Calu3 (cell line): ENCODE measurements at regions of chr6 and their contacts with region 1.

Region 1: DNA sequence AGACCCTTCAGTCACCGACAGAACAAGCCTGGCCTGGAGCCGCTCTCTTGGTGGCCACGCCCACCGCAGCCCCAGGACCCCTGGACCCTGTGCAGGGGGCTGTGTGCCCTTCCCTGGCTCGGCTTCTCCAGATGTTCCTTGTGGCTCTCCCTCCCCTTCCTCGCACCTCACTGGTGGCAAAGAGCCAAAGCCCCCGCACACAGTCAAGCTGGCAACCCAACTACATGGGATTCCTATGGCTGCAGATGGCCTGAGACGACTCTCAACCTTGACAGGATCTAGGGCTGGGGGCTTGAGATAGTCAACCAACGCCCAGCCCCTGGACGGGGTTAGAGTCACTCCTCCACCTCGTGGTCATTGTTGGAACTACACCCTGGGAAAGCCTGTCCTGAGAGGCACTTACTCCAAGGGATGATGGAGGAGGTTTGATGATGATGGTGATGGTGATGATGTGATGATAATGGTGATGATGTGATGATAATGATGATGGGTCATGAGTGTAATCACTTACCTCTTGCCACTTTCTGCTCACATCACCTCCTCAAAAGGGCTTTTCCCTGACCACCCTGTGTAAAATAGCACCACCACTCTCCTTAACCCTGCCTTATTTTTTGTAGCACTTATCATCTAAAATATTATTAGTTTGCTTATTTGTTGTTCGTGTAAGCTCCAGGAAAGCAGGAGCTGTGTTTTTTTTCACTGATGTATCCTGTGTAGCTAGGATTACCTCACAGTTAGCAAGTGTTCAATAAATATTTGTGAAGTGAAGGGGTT is 278.4 kb downstream of the LRFN2 start:
- DNase-seq: peak; percentile 82
- H3K4me3 Mint-ChIP-seq: no peak overlapping the region
- H3K27ac Mint-ChIP-seq: no peak overlapping the region
- H3K4me1 Mint-ChIP-seq: no peaks in the 10 kb centered on the region
- H3K27me3 Mint-ChIP-seq: peaks cover 66% of the 10 kb centered on the region
- CTCF ChIP-seq: peak; percentile 92

Region 2: GRCh38 chr6:39347906-39348585 is 960.7 kb before region 1 on chr6:
- CTCF ChIA-PET with region 1: no interaction called
- intact Hi-C with region 1: loop called (anchors 5 kb)
- DNase-seq: peak; percentile 83
- H3K4me3 Mint-ChIP-seq: no peak overlapping the region
- H3K27ac Mint-ChIP-seq: no peak overlapping the region
- H3K4me1 Mint-ChIP-seq: no peaks in the 10 kb centered on the region
- H3K27me3 Mint-ChIP-seq: peaks cover 85% of the 10 kb centered on the region
- CTCF ChIP-seq: peak; percentile 94

Region 3: DNA sequence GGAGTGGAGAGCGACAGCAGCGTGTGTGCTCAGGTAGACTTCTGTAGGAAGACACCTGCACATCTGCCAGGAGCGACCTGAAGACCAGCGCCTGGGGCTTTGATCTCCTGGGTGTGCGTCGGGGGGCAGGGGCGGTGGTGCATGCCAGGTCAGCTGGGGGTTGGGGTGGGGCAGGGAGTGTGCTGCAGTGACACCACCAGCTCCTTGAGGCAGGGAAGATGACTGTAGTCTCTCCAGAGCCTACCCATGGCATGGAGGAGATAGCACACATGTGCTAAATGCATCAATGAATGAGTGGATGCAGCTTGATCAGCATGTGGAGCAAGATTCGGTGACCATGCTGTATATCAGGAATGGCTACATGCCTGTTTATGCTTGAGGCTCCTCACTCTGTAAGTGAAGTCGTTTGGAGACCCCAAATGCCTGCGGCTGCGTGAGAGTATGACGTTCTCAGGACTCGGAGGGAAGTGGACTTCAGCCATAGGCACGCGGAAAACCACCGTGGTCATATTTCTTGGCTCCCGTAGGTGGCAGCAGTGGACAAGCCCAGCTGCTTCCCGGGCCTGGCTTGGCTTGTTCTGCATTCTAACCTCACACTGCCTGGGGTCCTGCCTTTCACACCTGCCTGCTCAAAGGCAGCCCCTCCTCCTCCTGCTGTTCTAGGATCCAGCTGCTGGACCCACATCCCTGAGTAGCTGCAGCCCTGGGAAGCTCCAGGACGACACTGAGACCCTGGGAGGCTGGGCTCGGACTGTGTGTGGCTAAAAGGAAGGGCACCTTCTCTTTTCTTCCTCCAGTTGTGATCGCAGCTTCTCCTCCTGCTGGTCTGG is 946.8 kb before region 1 on chr6:
- CTCF ChIA-PET with region 1: no interaction called
- intact Hi-C with region 1: loop called (anchors 5 kb)
- DNase-seq: peak; percentile 84
- H3K4me3 Mint-ChIP-seq: peak overlapping the region; percentile 20
- H3K27ac Mint-ChIP-seq: no peak overlapping the region
- H3K4me1 Mint-ChIP-seq: peaks cover 13% of the 10 kb centered on the region
- H3K27me3 Mint-ChIP-seq: peaks cover 44% of the 10 kb centered on the region
- CTCF ChIP-seq: peak; percentile 73

Region 4: DNA sequence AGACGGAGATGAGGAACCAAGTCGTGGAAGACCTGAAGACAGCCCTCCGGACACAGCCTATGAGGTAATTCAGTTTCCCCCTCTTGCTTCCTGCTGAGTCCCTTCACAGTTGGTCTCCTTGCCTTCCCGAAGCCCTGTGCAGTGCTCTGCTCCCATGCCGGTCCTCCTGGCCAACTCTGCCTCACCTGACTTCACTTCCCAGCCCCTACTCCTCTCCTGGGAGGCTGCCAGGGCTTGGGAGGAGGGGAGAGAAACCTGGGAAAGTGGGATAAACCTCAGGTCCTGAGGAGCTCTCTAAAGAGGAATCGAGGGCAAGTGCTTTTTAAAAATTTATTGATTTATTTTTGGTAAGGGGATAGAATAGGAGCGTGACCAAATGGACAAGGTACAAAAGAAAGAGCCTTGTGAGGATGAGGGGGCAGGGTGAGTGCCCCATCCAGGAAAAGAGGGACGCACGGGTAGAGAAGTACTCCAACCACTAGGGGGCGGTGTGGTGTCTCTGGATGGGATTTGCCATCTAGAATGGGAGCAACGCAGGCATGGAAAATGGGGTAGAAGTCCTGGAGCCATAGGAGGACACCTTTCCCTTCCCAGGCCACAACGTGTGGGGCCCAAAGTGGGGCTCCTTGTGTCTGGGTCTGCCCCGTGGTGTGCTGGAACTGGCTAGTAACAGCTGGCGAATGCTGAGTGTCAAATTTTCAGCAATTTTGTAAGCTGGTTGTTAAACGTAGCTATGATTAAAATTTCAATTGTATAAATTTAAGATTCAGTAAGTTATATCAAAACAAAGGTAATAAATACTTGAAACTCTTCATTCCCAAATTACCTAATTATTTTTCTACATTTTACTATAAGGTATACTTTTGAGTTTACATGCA is 443.5 kb before region 1 on chr6:
- CTCF ChIA-PET with region 1: no interaction called
- intact Hi-C with region 1: loop called (anchors 5 kb)
- DNase-seq: peak; percentile 79
- H3K4me3 Mint-ChIP-seq: no peak overlapping the region
- H3K27ac Mint-ChIP-seq: no peak overlapping the region
- H3K4me1 Mint-ChIP-seq: no peaks in the 10 kb centered on the region
- H3K27me3 Mint-ChIP-seq: peaks cover 55% of the 10 kb centered on the region
- CTCF ChIP-seq: peak; percentile 83

Region 5: GRCh38 chr6:39980839-39981580 is 327.7 kb before region 1 on chr6:
- CTCF ChIA-PET with region 1: interaction called, 11 read pairs
- intact Hi-C with region 1: loop called (anchors 1 kb)
- DNase-seq: peak; percentile 48
- H3K4me3 Mint-ChIP-seq: no peak overlapping the region
- H3K27ac Mint-ChIP-seq: no peak overlapping the region
- H3K4me1 Mint-ChIP-seq: no peaks in the 10 kb centered on the region
- H3K27me3 Mint-ChIP-seq: peaks cover 25% of the 10 kb centered on the region
- CTCF ChIP-seq: no peak

Region 6: GRCh38 chr6:40268614-40269013 is 40.1 kb before region 1 on chr6:
- CTCF ChIA-PET with region 1: no interaction called
- intact Hi-C with region 1: no loop called
- DNase-seq: no peak
- H3K4me3 Mint-ChIP-seq: no peak overlapping the region
- H3K27ac Mint-ChIP-seq: no peak overlapping the region
- H3K4me1 Mint-ChIP-seq: no peaks in the 10 kb centered on the region
- H3K27me3 Mint-ChIP-seq: no peaks in the 10 kb centered on the region
- CTCF ChIP-seq: no peak